ENCODE measurements at regions of chr1 and their contacts with region 1.

Region 1: GRCh38 chr1:193183019-193183627 is 3.3 kb downstream of the B3GALT2 start:
- DNase-seq: no peak
- ATAC-seq: peak; percentile 61
- H3K4me3 Mint-ChIP-seq: no peak overlapping the region
- H3K27ac Mint-ChIP-seq: no peak overlapping the region
- H3K4me1 Mint-ChIP-seq: peaks cover 24% of the 10 kb centered on the region
- H3K27me3 Mint-ChIP-seq: no peaks in the 10 kb centered on the region
- CTCF ChIP-seq: peak; percentile 83

Region 2: DNA sequence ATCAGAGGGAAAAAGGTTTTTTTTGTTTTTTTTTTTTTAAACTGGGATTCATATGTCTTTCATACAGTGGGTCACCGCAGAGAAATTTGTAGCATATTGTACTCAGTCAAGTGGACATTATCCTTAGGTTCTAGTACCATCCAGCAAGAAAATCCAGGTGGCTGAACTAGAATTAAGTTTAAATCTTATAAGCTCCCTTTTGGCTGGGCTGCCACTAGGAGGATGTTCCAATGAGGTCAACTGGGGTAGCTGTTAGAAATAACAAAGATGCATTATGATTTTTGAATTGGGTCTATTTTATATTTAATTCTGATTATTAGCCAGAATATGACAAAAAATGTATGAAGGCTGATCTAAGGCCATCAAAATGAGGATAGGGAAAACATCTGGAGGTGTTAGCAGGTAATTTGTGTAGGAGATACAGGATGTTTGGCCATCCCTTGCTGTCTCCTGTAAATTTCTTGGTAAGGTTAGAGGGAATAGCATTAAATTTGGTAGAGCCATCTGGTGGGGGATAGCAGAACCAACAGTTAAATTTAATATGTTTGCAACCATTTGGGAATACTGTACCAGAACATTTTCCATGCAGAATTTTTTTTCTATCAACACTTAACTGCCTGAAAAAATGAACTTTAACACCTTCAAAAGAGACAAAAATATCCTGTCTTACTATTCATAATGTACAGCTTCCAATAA is 571.8 kb after region 1 on chr1:
- CTCF ChIA-PET with region 1: no interaction called
- POLR2A ChIA-PET with region 1: no interaction called
- intact Hi-C with region 1: loop called (anchors 2 kb)
- DNase-seq: no peak
- ATAC-seq: no peak
- H3K4me3 Mint-ChIP-seq: no peak overlapping the region
- H3K27ac Mint-ChIP-seq: no peak overlapping the region
- H3K4me1 Mint-ChIP-seq: no peaks in the 10 kb centered on the region
- H3K27me3 Mint-ChIP-seq: no peaks in the 10 kb centered on the region
- CTCF ChIP-seq: no peak